CD4-positive, alpha-beta T cell (primary cell): ENCODE measurements at regions of chr1 and their contacts with region 1.

Region 1: GRCh38 chr1:54810100-54810942 is 9.2 kb upstream of the TTC22 start:
- DNase-seq: peak; percentile 37 to 77 (median 62)
- ATAC-seq: peak; percentile 88
- H3K4me3 ChIP-seq: no peak overlapping the region
- H3K4me3 Mint-ChIP-seq: no peak overlapping the region
- H3K27ac ChIP-seq: no peak overlapping the region
- H3K27ac Mint-ChIP-seq: no peak overlapping the region
- H3K4me1 ChIP-seq: peaks cover 21% of the 10 kb centered on the region
- H3K4me1 Mint-ChIP-seq: no peaks in the 10 kb centered on the region
- H3K27me3 ChIP-seq: no peaks in the 10 kb centered on the region
- H3K27me3 Mint-ChIP-seq: no peaks in the 10 kb centered on the region
- CTCF ChIP-seq: peak; percentile 86

Region 2: GRCh38 chr1:53485478-53486394 is 1324.6 kb before region 1 on chr1:
- CTCF ChIA-PET with region 1: no interaction called
- POLR2A ChIA-PET with region 1: no interaction called
- intact Hi-C with region 1: loop called in 1 of 2 experiments (anchors 10 kb)
- DNase-seq: peak; percentile 24 to 75 (median 46)
- ATAC-seq: no peak
- H3K4me3 ChIP-seq: no peak overlapping the region
- H3K4me3 Mint-ChIP-seq: no peak overlapping the region
- H3K27ac ChIP-seq: no peak overlapping the region
- H3K27ac Mint-ChIP-seq: no peak overlapping the region
- H3K4me1 ChIP-seq: peaks cover 7% of the 10 kb centered on the region
- H3K4me1 Mint-ChIP-seq: no peaks in the 10 kb centered on the region
- H3K27me3 ChIP-seq: peaks cover 3 to 12% of the 10 kb centered on the region in 2 experiments
- H3K27me3 Mint-ChIP-seq: peaks cover 42% of the 10 kb centered on the region
- CTCF ChIP-seq: peak; percentile 76

Region 3: GRCh38 chr1:53860967-53861411 is 949.3 kb before region 1 on chr1:
- CTCF ChIA-PET with region 1: no interaction called
- POLR2A ChIA-PET with region 1: no interaction called
- intact Hi-C with region 1: loop called in 1 of 2 experiments (anchors 5 kb)
- DNase-seq: peak; percentile 8 to 80 (median 32)
- ATAC-seq: peak; percentile 88
- H3K4me3 ChIP-seq: no peak overlapping the region
- H3K4me3 Mint-ChIP-seq: no peak overlapping the region
- H3K27ac ChIP-seq: no peak overlapping the region
- H3K27ac Mint-ChIP-seq: no peak overlapping the region
- H3K4me1 ChIP-seq: peaks cover 5% of the 10 kb centered on the region
- H3K4me1 Mint-ChIP-seq: peaks cover 9% of the 10 kb centered on the region
- H3K27me3 ChIP-seq: no peaks in the 10 kb centered on the region
- H3K27me3 Mint-ChIP-seq: no peaks in the 10 kb centered on the region
- CTCF ChIP-seq: peak; percentile 79

Region 4: DNA sequence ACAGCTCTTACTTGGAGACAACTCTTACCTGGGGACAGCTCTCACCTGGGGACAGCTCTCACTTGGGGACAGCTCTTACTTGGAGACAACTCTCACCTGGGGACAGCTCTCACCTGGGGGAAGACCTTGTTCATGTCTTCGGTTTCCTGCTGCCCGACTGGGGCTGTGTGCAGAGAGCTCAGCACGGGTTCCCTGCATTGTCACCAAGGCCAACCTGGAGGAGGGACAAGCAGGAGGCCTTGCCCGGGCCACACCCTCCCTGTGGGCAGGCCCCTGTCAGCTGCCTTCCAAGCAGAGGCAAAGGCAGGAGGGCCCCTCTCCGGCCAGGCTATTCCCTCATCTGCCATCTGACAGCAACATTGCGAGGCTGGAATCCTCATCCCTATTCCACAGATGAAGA is 792.3 kb before region 1 on chr1 and contains the start of gene LDLRAD1:
- CTCF ChIA-PET with region 1: no interaction called
- POLR2A ChIA-PET with region 1: no interaction called
- intact Hi-C with region 1: no loop called
- DNase-seq: no peak
- ATAC-seq: no peak
- H3K4me3 ChIP-seq: no peak within 1 kb of the TSS
- H3K4me3 Mint-ChIP-seq: no peak within 1 kb of the TSS
- H3K27ac ChIP-seq: no peak within 1 kb of the TSS
- H3K27ac Mint-ChIP-seq: no peak within 1 kb of the TSS
- H3K4me1 ChIP-seq: no peaks in the 10 kb centered on the region
- H3K4me1 Mint-ChIP-seq: no peaks in the 10 kb centered on the region
- H3K27me3 ChIP-seq: no peaks in the 10 kb centered on the region
- H3K27me3 Mint-ChIP-seq: no peaks in the 10 kb centered on the region
- CTCF ChIP-seq: no peak
- total RNA-seq, gene LDLRAD1: not detected

Region 5: DNA sequence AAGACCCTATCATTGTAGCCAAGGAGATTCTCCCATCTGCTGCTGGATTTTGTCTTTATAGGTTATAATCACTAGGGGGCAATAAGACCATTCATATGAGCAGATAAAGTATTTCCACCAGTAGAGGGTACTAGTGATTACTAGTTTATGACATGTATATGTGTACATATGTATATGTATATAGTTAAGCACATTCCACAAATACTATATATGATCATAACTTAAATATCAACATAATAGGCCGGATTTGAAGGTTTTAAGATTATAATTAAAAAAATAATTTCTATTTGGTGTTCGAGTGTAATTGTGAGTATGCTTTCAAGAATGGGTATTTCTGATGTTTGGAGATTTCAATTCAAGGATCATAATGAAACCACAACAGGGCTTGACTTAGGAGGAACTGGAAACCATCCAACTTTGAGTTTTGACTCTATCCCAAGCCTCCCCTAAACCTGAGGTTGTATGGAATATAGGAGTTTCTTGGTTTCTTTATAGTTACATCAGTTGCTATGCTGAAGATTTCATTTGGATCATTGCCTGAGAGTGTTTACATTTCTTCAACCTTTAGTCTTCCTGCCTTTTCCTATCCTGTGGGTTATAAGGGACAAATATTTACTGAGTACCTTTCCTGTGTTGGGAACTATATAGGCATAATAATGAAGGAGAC is 740.0 kb before region 1 on chr1:
- CTCF ChIA-PET with region 1: no interaction called
- POLR2A ChIA-PET with region 1: no interaction called
- intact Hi-C with region 1: loop called (anchors 1 kb)
- DNase-seq: peak in 3 of 14 experiments; percentile 70 to 74 (median 72)
- ATAC-seq: peak; percentile 94
- H3K4me3 ChIP-seq: no peak overlapping the region
- H3K4me3 Mint-ChIP-seq: no peak overlapping the region
- H3K27ac ChIP-seq: no peak overlapping the region
- H3K27ac Mint-ChIP-seq: no peak overlapping the region
- H3K4me1 ChIP-seq: no peaks in the 10 kb centered on the region
- H3K4me1 Mint-ChIP-seq: no peaks in the 10 kb centered on the region
- H3K27me3 ChIP-seq: no peaks in the 10 kb centered on the region
- H3K27me3 Mint-ChIP-seq: no peaks in the 10 kb centered on the region
- CTCF ChIP-seq: peak; percentile 99

Region 6: DNA sequence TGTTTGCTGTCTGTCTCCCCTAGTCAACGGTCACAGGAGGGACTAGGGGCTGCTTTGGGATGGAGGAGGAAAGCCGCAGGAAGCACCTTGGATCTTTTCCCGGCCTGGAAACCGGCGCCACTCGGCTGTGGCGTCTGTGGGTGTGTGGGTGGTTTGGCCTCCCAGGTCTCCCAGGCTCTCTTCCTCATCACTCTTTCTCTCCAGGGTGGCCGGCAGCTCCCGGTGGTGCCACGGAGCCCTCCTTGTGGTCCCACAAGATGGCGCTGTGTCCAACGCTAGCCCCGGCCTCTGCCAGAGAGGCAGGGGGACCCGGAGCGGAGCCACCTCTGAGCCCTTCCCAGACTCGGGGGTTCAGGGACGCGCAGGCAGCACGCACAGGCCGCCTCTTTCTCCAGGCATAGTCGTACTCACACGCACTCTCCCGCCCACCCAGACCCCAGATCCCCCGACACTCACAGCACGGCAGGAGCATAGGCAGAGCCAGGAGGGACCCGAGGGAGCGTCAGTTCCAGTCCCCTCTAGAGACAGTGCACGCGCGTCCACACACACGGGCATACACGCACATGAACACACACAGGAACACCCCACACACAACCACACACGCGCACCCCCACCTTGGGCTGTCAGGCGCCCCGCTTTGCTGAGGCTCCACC is 688.7 kb before region 1 on chr1:
- CTCF ChIA-PET with region 1: no interaction called
- POLR2A ChIA-PET with region 1: no interaction called
- intact Hi-C with region 1: loop called in 1 of 2 experiments (anchors 1 kb)
- DNase-seq: peak; percentile 51 to 79 (median 60)
- ATAC-seq: peak; percentile 85
- H3K4me3 ChIP-seq: peak overlapping the region; percentile 4
- H3K4me3 Mint-ChIP-seq: no peak overlapping the region
- H3K27ac ChIP-seq: no peak overlapping the region
- H3K27ac Mint-ChIP-seq: no peak overlapping the region
- H3K4me1 ChIP-seq: peaks cover 9% of the 10 kb centered on the region
- H3K4me1 Mint-ChIP-seq: no peaks in the 10 kb centered on the region
- H3K27me3 ChIP-seq: no peaks in the 10 kb centered on the region
- H3K27me3 Mint-ChIP-seq: peaks cover 3% of the 10 kb centered on the region
- CTCF ChIP-seq: peak; percentile 59

Region 7: DNA sequence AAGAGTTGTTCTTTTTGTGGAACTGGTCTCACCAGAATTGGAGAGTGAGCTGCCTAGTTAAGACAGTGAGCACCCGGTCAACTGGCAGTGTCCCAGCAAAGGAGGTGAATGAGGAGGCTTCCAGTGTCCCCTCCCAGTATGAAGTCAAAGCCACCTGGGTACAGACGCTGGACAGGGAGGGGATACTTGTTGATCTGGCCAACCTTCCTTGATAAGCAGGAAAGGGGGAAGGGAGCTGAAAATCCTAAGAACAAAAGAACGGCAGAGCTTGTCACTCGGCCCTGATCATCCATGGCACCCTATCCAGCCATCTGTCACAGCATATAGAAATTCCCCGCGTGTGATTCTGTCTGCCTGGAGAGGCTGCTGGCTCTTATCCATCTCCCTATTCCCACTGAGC is 495.6 kb before region 1 on chr1:
- CTCF ChIA-PET with region 1: no interaction called
- POLR2A ChIA-PET with region 1: no interaction called
- intact Hi-C with region 1: no loop called
- DNase-seq: no peak
- ATAC-seq: no peak
- H3K4me3 ChIP-seq: no peak overlapping the region
- H3K4me3 Mint-ChIP-seq: no peak overlapping the region
- H3K27ac ChIP-seq: no peak overlapping the region
- H3K27ac Mint-ChIP-seq: peak overlapping the region; percentile 75
- H3K4me1 ChIP-seq: peaks cover 50% of the 10 kb centered on the region
- H3K4me1 Mint-ChIP-seq: peaks cover 84% of the 10 kb centered on the region
- H3K27me3 ChIP-seq: no peaks in the 10 kb centered on the region
- H3K27me3 Mint-ChIP-seq: no peaks in the 10 kb centered on the region
- CTCF ChIP-seq: no peak

Region 8: GRCh38 chr1:54499360-54500106 is 310.8 kb before region 1 on chr1:
- CTCF ChIA-PET with region 1: no interaction called
- POLR2A ChIA-PET with region 1: no interaction called
- intact Hi-C with region 1: loop called (anchors 1 to 2 kb)
- DNase-seq: peak in 8 of 14 experiments; percentile 25 to 64 (median 48)
- ATAC-seq: peak; percentile 83
- H3K4me3 ChIP-seq: peak overlapping the region; percentile 41
- H3K4me3 Mint-ChIP-seq: peak overlapping the region; percentile 79
- H3K27ac ChIP-seq: no peak overlapping the region
- H3K27ac Mint-ChIP-seq: no peak overlapping the region
- H3K4me1 ChIP-seq: peaks cover 13% of the 10 kb centered on the region
- H3K4me1 Mint-ChIP-seq: peaks cover 13% of the 10 kb centered on the region
- H3K27me3 ChIP-seq: peaks cover 13 to 30% of the 10 kb centered on the region in 2 experiments
- H3K27me3 Mint-ChIP-seq: peaks cover 48% of the 10 kb centered on the region
- CTCF ChIP-seq: peak; percentile 49

Region 9: DNA sequence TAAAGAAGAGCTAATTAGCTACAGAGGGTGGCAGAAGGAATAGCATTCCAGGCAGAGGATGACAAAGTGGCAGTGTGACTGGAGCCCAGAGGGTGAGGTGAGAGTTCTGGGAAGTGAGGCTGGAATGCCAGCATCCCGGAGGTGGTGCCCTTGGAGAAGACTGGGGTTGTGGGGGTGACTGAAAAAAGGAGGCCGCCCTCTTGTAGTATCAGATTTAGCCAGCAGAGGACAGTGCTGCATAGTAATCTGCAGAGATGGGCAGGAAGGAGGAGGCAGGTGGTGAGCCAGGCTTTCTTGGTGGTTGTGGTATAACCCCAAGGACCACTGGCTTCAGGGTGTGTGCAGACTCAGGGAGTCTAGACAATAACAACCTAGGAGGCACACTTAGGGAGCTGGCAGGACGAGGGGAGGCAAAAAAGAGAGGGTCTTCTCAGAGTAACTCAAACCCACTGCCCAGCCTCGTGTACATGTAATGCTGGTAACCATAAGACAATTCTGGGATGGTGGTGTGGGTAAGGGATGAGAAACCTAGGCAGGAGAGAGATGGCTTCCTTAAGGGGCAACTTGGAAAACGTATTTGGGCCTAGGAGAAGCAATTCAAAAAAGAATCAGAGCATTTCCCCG is 138.2 kb before region 1 on chr1:
- CTCF ChIA-PET with region 1: no interaction called
- POLR2A ChIA-PET with region 1: no interaction called
- intact Hi-C with region 1: loop called (anchors 1 kb)
- DNase-seq: peak; percentile 26 to 76 (median 52)
- ATAC-seq: peak; percentile 84
- H3K4me3 ChIP-seq: no peak overlapping the region
- H3K4me3 Mint-ChIP-seq: no peak overlapping the region
- H3K27ac ChIP-seq: no peak overlapping the region
- H3K27ac Mint-ChIP-seq: no peak overlapping the region
- H3K4me1 ChIP-seq: peaks cover 3% of the 10 kb centered on the region
- H3K4me1 Mint-ChIP-seq: no peaks in the 10 kb centered on the region
- H3K27me3 ChIP-seq: no peaks in the 10 kb centered on the region
- H3K27me3 Mint-ChIP-seq: no peaks in the 10 kb centered on the region
- CTCF ChIP-seq: peak; percentile 80